Adrenal gland (tissue), 19 donors: ENCODE measurements at regions of chr12 and their contacts with region 1.

Region 1: GRCh38 chr12:117212563-117213190 is 22.4 kb upstream of the FBXO21 start:
- DNase-seq: peak; percentile 75 to 94 (median 80)
- H3K4me3 ChIP-seq: no peak overlapping the region
- H3K27ac ChIP-seq: no peak overlapping the region
- H3K4me1 ChIP-seq: no peaks in the 10 kb centered on the region
- H3K27me3 ChIP-seq: peaks cover 4% of the 10 kb centered on the region
- CTCF ChIP-seq: peak; percentile 84 to 93 (median 88)
- POLR2A ChIP-seq: no peak

Region 2: DNA sequence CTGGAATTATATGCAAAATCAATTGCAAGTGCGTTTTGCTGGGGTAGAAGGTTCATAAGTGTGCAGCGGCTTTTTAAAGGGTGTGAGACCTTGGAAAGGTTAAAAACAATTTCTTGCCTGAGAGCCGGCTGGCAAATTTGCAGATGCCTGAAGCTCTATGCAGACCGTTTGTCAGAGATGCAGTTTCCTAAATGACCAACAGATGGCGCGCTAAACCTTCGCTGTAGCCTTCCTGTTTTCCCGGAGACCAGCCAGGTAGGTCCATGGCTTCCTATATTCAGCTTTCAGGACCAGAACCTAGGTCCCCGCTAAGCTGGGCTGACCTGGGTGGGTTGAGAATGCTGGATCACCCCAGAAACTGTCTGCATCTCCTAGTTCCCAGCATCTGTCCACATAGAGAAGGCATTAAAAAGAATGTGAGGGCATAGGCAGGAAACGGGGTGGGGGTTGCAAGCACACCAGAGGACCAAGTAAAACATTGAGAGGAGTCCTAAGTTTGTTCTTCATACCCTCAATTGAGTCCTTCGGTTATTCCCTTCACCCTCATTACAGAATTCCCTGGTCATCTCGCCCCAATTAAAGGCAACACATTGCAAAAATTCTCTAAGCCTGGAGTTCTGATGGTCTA is 154.4 kb after region 1 on chr12:
- intact Hi-C with region 1: loop called in 1 of 2 experiments (anchors 10 kb)
- DNase-seq: peak; percentile 57 to 92 (median 83)
- H3K4me3 ChIP-seq: no peak overlapping the region
- H3K27ac ChIP-seq: no peak overlapping the region
- H3K4me1 ChIP-seq: no peaks in the 10 kb centered on the region
- H3K27me3 ChIP-seq: peaks cover 16% of the 10 kb centered on the region
- CTCF ChIP-seq: peak; percentile 80 to 89 (median 88)
- POLR2A ChIP-seq: no peak

Region 3: GRCh38 chr12:117587631-117588287 is 375.1 kb after region 1 on chr12:
- intact Hi-C with region 1: loop called in 1 of 2 experiments (anchors 10 kb)
- DNase-seq: peak; percentile 35 to 73 (median 60)
- H3K4me3 ChIP-seq: no peak overlapping the region
- H3K27ac ChIP-seq: no peak overlapping the region
- H3K4me1 ChIP-seq: no peaks in the 10 kb centered on the region
- H3K27me3 ChIP-seq: peaks cover 8% of the 10 kb centered on the region
- CTCF ChIP-seq: peak; percentile 73 to 87 (median 80)
- POLR2A ChIP-seq: no peak